WTC11 (cell line): ENCODE measurements at regions of chr1 and their contacts with region 1.

Region 1: DNA sequence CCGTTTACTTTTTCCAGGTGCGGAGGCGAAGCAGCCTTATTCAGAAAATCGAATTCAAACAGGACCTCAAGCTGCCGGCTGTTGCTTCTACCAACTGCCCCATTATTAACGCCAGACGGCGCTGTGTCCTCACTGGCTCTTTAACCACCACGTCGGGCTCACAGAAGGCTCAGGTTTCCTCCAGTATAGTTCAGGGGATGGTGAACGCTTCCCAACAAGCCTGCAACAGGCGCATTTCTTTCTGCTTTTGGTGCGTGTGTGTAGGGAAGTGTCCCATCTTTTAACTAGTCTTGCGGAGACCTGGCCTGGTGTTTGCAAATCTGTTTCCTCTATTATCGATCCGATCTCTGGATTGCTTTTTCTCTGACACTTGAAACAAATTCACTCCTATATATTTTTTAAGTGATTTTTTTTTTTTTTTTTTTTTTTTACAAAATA is 791 bp upstream of the STUM start:
- DNase-seq: peak; percentile 86
- ATAC-seq: peak; percentile 79
- H3K4me3 Mint-ChIP-seq: peak overlapping the region; percentile 50
- H3K27ac Mint-ChIP-seq: no peak overlapping the region
- H3K4me1 Mint-ChIP-seq: peaks cover 23% of the 10 kb centered on the region
- H3K27me3 Mint-ChIP-seq: peaks cover 70% of the 10 kb centered on the region
- CTCF ChIP-seq: peak; percentile 58

Region 2: GRCh38 chr1:226476648-226477319 is 71.0 kb before region 1 on chr1:
- CTCF ChIA-PET with region 1: interaction called, 29 read pairs
- POLR2A ChIA-PET with region 1: no interaction called
- DNase-seq: no peak
- ATAC-seq: no peak
- H3K4me3 Mint-ChIP-seq: no peak overlapping the region
- H3K27ac Mint-ChIP-seq: no peak overlapping the region
- H3K4me1 Mint-ChIP-seq: peaks cover 17% of the 10 kb centered on the region
- H3K27me3 Mint-ChIP-seq: peaks cover 8% of the 10 kb centered on the region; the same call in 1 of the 2 replicates
- CTCF ChIP-seq: no peak

Region 3: DNA sequence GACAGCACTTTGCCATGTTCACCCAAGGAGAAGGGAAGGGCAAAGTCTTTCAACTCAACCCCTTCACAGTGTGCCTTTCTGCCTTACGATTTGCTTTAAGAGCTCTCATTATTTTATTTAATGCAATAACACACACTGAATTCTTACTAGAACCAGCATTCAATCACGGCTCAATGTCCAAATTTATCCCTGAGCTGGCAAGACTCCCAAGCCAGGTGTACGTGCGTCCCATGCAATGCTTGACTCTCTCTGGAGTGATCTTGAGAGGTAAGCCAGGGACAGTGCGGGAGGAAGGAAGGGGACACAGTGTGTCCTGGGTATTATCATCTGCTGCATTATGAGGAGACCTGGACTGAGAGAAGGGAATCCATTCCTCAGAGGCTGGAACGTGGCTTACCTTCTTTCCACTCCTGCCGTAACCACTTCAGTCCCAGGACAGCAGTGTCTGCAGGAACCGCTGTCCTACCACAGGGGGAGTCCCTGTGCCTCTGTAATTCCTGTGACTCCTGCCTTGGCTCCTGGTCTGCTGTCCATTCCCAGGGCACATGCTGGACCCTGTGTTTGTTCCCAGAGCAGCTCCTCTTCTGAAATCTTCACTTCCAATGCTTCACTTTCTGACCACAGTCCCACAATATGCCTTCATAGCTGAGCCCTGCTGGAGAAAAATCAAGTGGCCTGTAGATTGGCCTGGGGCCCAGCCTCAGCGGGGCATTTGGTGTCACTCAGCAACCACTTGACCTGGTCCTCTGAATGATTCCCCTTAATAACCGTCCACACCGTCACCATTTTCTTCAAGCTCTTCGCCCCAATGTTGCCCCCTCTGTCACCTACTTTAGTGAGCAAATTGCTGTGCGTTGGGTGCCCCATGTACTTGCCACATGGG is 27.8 kb before region 1 on chr1:
- CTCF ChIA-PET with region 1: interaction called, 30 read pairs
- POLR2A ChIA-PET with region 1: no interaction called
- DNase-seq: peak; percentile 35
- ATAC-seq: peak; percentile 78
- H3K4me3 Mint-ChIP-seq: no peak overlapping the region; the same call in 1 of the 2 replicates
- H3K27ac Mint-ChIP-seq: no peak overlapping the region
- H3K4me1 Mint-ChIP-seq: peaks cover 25% of the 10 kb centered on the region
- H3K27me3 Mint-ChIP-seq: peaks cover 21% of the 10 kb centered on the region
- CTCF ChIP-seq: no peak

Region 4: GRCh38 chr1:226526801-226527595 is 20.8 kb before region 1 on chr1:
- CTCF ChIA-PET with region 1: interaction called, 19 read pairs
- POLR2A ChIA-PET with region 1: no interaction called
- DNase-seq: peak; percentile 71
- ATAC-seq: peak; percentile 98
- H3K4me3 Mint-ChIP-seq: no peak overlapping the region
- H3K27ac Mint-ChIP-seq: no peak overlapping the region
- H3K4me1 Mint-ChIP-seq: peaks cover 14% of the 10 kb centered on the region
- H3K27me3 Mint-ChIP-seq: peaks cover 20% of the 10 kb centered on the region
- CTCF ChIP-seq: no peak

Region 5: GRCh38 chr1:226569879-226570547 is 22.2 kb after region 1 on chr1:
- CTCF ChIA-PET with region 1: interaction called, 98 read pairs
- POLR2A ChIA-PET with region 1: interaction called, 8 read pairs
- DNase-seq: peak; percentile 77
- ATAC-seq: peak; percentile 94
- H3K4me3 Mint-ChIP-seq: no peak overlapping the region
- H3K27ac Mint-ChIP-seq: no peak overlapping the region
- H3K4me1 Mint-ChIP-seq: peaks cover 13% of the 10 kb centered on the region
- H3K27me3 Mint-ChIP-seq: no peaks in the 10 kb centered on the region; the same call in 1 of the 2 replicates
- CTCF ChIP-seq: no peak

Region 6: GRCh38 chr1:226608699-226609505 is 61.1 kb after region 1 on chr1:
- CTCF ChIA-PET with region 1: interaction called, 77 read pairs
- POLR2A ChIA-PET with region 1: interaction called, 3 read pairs
- DNase-seq: peak; percentile 86
- ATAC-seq: peak; percentile 66
- H3K4me3 Mint-ChIP-seq: no peak overlapping the region; the same call in 1 of the 2 replicates
- H3K27ac Mint-ChIP-seq: no peak overlapping the region
- H3K4me1 Mint-ChIP-seq: peaks cover 43% of the 10 kb centered on the region
- H3K27me3 Mint-ChIP-seq: no peaks in the 10 kb centered on the region; the same call in none of the 2 replicates
- CTCF ChIP-seq: peak; percentile 93

Region 7: GRCh38 chr1:226642876-226643576 is 95.3 kb after region 1 on chr1:
- CTCF ChIA-PET with region 1: no interaction called
- POLR2A ChIA-PET with region 1: no interaction called
- DNase-seq: no peak
- ATAC-seq: no peak; the same call in 1 of the 2 replicates
- H3K4me3 Mint-ChIP-seq: no peak overlapping the region
- H3K27ac Mint-ChIP-seq: no peak overlapping the region
- H3K4me1 Mint-ChIP-seq: peaks cover 14% of the 10 kb centered on the region
- H3K27me3 Mint-ChIP-seq: no peaks in the 10 kb centered on the region
- CTCF ChIP-seq: no peak